H1 (cell line): ENCODE measurements at regions of chr6 and their contacts with region 1.

Region 1: DNA sequence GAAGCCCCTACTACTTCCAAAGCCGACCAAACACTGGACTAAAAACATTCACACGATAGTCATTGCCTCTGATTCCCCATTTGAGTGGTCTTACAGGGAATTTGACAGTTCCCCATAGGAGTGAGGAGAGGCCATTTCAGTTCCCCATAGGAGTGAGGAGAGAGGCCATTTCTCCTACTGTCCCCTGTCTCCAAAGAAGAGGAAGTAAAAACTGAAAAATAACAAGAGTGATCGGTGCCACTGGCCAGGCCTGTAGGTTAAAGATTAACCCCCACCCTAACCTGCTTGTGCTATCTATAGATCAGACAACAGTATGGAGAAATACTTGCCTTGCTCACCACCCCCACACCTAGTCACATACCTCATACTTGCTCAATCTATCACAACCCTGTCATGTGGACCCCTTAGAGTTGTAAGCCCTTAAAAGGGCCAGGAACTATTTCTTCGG is 204.0 kb upstream of the MOCS1 start:
- DNase-seq: no peak
- H3K4me3 ChIP-seq: no peak overlapping the region
- H3K27ac ChIP-seq: no peak overlapping the region
- H3K4me1 ChIP-seq: no peaks in the 10 kb centered on the region
- H3K27me3 ChIP-seq: no peaks in the 10 kb centered on the region
- CTCF ChIP-seq: no peak
- EP300 ChIP-seq: no peak
- POLR2A ChIP-seq: no peak
- RAD21 ChIP-seq: no peak

Region 2: DNA sequence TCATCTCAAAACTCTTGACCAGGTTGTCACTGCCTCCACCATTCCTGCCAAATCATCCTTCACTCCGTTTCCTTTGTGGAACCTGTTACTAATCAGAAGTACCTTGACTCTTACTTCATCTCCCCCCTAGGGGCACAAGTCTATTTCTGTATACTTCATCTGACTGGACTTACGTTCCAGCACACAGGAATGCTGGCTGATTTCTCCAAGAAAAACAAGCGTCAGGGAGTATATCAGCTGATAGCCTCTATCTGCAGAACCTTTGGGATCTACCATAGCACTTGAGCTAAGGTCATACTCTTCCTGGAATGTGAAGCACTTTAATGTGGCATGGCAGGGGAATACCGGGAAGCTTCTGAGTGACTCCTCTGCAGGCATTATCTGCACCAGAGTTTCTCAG is 25.9 kb before region 1 on chr6:
- CTCF ChIA-PET with region 1: interaction called, 11 read pairs
- POLR2A ChIA-PET with region 1: no interaction called
- DNase-seq: no peak
- H3K4me3 ChIP-seq: no peak overlapping the region
- H3K27ac ChIP-seq: no peak overlapping the region
- H3K4me1 ChIP-seq: peaks cover 0 to 4% (median 0%) of the 10 kb centered on the region in 4 experiments; a peak in 1 of 7 replicates
- H3K27me3 ChIP-seq: no peaks in the 10 kb centered on the region
- CTCF ChIP-seq: peak in 2 of 3 experiments; percentile 10 to 45; a peak in 2 of 4 replicates
- EP300 ChIP-seq: no peak
- POLR2A ChIP-seq: no peak
- RAD21 ChIP-seq: peak in 1 of 2 experiments; percentile 31; a peak in 3 of 4 replicates

Region 3: GRCh38 chr6:40196135-40196518 is 57.8 kb after region 1 on chr6:
- CTCF ChIA-PET with region 1: no interaction called
- POLR2A ChIA-PET with region 1: no interaction called
- DNase-seq: no peak
- H3K4me3 ChIP-seq: no peak overlapping the region
- H3K27ac ChIP-seq: no peak overlapping the region
- H3K4me1 ChIP-seq: no peaks in the 10 kb centered on the region
- H3K27me3 ChIP-seq: no peaks in the 10 kb centered on the region
- CTCF ChIP-seq: no peak
- EP300 ChIP-seq: no peak
- POLR2A ChIP-seq: no peak
- RAD21 ChIP-seq: no peak